Caco-2 (cell line): ENCODE measurements at regions of chr3 and their contacts with region 1.

Region 1: DNA sequence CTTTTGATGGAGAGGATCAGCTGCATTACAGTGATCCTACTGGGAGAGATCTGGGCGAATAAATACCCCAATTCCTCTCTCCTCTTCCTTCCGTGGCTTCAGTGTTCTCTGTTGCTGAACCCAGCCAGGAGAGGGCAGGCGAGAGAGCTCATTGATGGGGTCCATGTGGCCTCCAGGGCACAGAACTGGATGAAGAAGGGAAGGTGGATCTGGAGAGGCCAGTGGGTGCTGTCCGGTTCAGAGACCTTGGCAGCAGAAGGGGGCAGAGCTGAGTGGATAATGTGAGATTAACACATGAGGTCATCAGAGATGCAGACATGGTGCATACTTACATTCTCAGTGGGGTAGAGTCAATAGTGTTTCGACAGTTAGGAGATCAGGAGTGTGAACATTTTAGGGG is 193.6 kb downstream of the CLSTN2 start:
- DNase-seq: peak; percentile 47 to 53
- H3K4me3 ChIP-seq: no peak overlapping the region
- H3K4me3 Mint-ChIP-seq: no peak overlapping the region
- H3K27ac Mint-ChIP-seq: no peak overlapping the region
- H3K4me1 ChIP-seq: no peaks in the 10 kb centered on the region
- H3K4me1 Mint-ChIP-seq: no peaks in the 10 kb centered on the region
- H3K27me3 ChIP-seq: no peaks in the 10 kb centered on the region; the same call in 1 of the 2 replicates
- H3K27me3 Mint-ChIP-seq: peaks cover 8% of the 10 kb centered on the region
- CTCF ChIP-seq: peak; percentile 57 to 77

Region 2: GRCh38 chr3:140268103-140268502 is 139.5 kb after region 1 on chr3:
- CTCF ChIA-PET with region 1: no interaction called
- POLR2A ChIA-PET with region 1: no interaction called
- intact Hi-C with region 1: loop called (anchors 1 kb)
- DNase-seq: no peak
- H3K4me3 ChIP-seq: no peak overlapping the region
- H3K4me3 Mint-ChIP-seq: no peak overlapping the region
- H3K27ac Mint-ChIP-seq: no peak overlapping the region
- H3K4me1 ChIP-seq: no peaks in the 10 kb centered on the region
- H3K4me1 Mint-ChIP-seq: no peaks in the 10 kb centered on the region
- H3K27me3 ChIP-seq: no peaks in the 10 kb centered on the region
- H3K27me3 Mint-ChIP-seq: peaks cover 3% of the 10 kb centered on the region
- CTCF ChIP-seq: no peak